ENCODE measurements at regions of chr9 and their contacts with region 1.

Region 1: GRCh38 chr9:70639853-70640814 is 225.7 kb upstream of the KLF9 start:
- DNase-seq: no peak
- ATAC-seq: peak in 3 of 4 donors; percentile 58 to 71 (median 64)
- H3K4me3 ChIP-seq: peak overlapping the region in 1 of 12 donors; percentile 18
- H3K27ac ChIP-seq: no peak overlapping the region
- H3K4me1 ChIP-seq: no peaks in the 10 kb centered on the region
- H3K27me3 ChIP-seq: no peaks in the 10 kb centered on the region
- CTCF ChIP-seq: peak; percentile 44 to 79 (median 61)
- POLR2A ChIP-seq: no peak

Region 2: DNA sequence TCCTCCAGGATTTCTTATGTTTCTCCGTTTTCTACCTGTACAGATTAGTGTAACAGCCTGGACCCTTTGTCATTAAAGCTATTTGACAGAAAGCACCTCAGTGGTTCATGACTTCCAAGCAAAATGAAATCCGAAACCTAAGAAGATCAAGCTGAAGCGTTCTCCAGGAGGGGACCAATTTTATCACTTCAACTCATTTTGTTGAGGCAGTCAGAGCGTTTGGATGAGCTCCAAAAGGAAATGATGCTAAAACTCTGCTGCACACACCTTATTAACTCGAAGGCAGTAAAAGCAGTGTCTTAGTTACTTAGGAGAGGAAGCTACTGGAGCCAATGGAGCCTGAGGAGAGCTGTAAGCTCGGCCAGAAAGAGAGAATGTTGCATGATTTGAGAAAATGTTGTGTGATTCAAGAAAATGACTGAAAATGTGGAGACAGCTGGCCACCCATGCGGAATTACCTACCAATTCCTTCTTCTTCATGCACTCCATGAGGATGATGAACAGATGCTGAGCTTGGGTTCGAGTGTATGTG is 121.1 kb after region 1 on chr9:
- intact Hi-C with region 1: no loop called
- DNase-seq: no peak
- ATAC-seq: no peak
- H3K4me3 ChIP-seq: no peak overlapping the region
- H3K27ac ChIP-seq: no peak overlapping the region
- H3K4me1 ChIP-seq: no peaks in the 10 kb centered on the region
- H3K27me3 ChIP-seq: no peaks in the 10 kb centered on the region
- CTCF ChIP-seq: no peak
- POLR2A ChIP-seq: no peak

Region 3: DNA sequence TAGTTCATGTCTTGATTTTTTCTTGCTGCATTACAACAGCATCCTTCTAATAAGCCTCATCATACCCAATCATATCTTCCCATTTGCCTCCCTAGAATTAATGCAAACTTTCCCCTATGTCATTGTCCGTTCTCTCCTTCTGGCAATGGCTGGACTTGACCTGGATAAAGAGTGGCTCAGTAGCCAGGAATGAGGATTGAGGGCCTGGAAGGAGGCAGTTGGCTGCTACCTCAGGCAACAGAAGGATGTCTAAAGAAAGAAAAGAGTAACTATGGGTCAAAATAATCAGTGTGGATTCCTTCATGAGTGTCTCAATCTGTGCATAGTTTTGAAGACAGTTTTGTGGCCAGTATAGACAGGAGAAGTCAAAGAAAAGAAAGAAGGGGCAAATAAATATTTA is 271.7 kb after region 1 on chr9:
- intact Hi-C with region 1: loop called in 1 of 10 experiments (anchors 10 kb)
- DNase-seq: no peak
- ATAC-seq: peak in 2 of 4 donors; percentile 29 to 35
- H3K4me3 ChIP-seq: no peak overlapping the region
- H3K27ac ChIP-seq: no peak overlapping the region
- H3K4me1 ChIP-seq: peaks cover 0 to 9% (median 0%) of the 10 kb centered on the region in 12 donors
- H3K27me3 ChIP-seq: no peaks in the 10 kb centered on the region
- CTCF ChIP-seq: no peak
- POLR2A ChIP-seq: no peak

Region 4: GRCh38 chr9:70924895-70925547 is 284.9 kb after region 1 on chr9:
- intact Hi-C with region 1: loop called in 3 of 10 experiments (anchors 10 kb)
- DNase-seq: peak in 3 of 5 donors; percentile 14 to 20 (median 19)
- ATAC-seq: peak; percentile 55 to 92 (median 88)
- H3K4me3 ChIP-seq: peak overlapping the region in 8 of 12 donors; percentile 2 to 41 (median 13)
- H3K27ac ChIP-seq: no peak overlapping the region
- H3K4me1 ChIP-seq: peaks cover 0 to 3% (median 0%) of the 10 kb centered on the region in 12 donors
- H3K27me3 ChIP-seq: no peaks in the 10 kb centered on the region
- CTCF ChIP-seq: peak; percentile 48 to 85 (median 70)
- POLR2A ChIP-seq: no peak

Region 5: DNA sequence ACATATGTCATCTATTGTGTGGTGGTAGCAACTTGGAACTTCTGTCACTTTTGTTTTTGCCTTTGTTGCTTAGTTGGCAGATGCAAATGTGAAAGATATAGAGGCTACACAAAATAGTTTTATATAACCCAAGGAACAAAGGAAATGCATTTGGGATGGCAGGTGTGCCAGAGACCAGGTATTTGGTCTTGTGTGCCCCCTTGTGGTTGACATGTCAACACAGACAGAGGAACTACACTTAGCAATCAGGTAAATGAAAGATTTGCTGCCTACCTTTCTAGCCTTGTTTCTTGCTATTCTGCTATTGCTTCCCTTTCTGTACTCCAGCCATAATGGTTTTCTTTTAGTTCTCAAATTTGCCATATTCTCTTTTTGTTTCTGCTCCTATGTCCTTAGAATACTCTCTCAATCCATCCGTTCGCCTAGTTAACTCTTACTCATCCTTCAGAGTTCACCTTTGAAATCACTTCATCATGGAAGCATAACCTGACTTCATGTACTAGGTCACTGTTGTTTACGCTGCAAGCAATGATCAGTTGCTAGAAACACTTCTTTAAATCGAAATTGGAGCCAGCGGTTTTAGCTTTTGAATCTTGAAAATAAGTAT is 361.7 kb after region 1 on chr9:
- intact Hi-C with region 1: loop called in 9 of 10 experiments (anchors 5 to 10 kb)
- DNase-seq: no peak
- ATAC-seq: no peak
- H3K4me3 ChIP-seq: no peak overlapping the region
- H3K27ac ChIP-seq: no peak overlapping the region
- H3K4me1 ChIP-seq: no peaks in the 10 kb centered on the region
- H3K27me3 ChIP-seq: no peaks in the 10 kb centered on the region
- CTCF ChIP-seq: peak in 11 of 12 donors; percentile 18 to 55 (median 42)
- POLR2A ChIP-seq: no peak

Region 6: GRCh38 chr9:71249729-71250317 is 609.7 kb after region 1 on chr9:
- intact Hi-C with region 1: loop called (anchors 1 to 5 kb)
- DNase-seq: peak in 1 of 5 donors; percentile 9
- ATAC-seq: peak in 3 of 4 donors; percentile 49 to 78 (median 57)
- H3K4me3 ChIP-seq: no peak overlapping the region
- H3K27ac ChIP-seq: no peak overlapping the region
- H3K4me1 ChIP-seq: no peaks in the 10 kb centered on the region
- H3K27me3 ChIP-seq: peaks cover 0 to 14% (median 0%) of the 10 kb centered on the region in 9 donors
- CTCF ChIP-seq: peak; percentile 36 to 87 (median 65)
- POLR2A ChIP-seq: no peak

Measured in heart left ventricle (tissue), 16 donors.